ENCODE measurements at regions of chr12 and their contacts with region 1.

Region 1: DNA sequence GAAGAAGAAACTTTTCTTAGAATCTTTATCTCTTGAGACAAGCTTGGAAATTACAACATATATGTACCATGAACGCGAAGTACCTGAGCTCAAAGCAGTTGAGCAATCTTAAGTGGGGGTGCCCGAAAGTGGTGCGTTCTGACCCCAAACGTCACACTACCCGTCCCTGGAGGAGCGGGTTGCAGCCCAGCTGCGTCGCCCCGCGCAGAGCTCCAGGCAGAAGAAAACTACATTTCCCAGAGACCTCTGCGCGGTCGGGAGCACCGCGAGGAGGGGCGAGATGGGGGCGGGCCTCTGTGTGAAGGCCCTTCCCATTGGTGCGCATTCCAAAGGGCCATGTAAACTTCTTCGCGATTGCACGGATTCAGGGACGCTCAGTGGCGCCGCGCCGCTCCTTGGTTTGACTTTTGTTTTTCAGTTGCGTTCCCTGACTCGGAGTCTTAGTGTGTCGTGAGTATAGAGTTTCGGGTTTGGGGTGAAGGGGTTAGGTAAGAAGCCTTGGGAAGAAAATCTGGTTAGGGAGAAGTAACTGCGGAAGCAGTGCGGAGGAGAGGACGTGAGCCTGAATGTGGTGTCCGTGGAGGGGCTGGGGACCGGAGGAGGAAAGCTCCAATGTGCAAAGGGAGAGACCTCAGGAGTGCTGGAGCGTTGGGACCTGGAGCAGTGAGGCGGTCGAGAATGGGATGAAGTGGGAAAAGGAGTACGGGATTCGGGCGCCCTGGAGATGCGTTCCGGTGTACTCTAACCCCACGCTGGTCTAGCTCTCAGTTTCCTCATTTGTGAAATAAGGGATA is at the start of gene CCDC77:
- DNase-seq: peak; percentile 97
- ATAC-seq: peak; percentile 100
- H3K4me3 ChIP-seq: peak within 1 kb of the TSS; percentile 76 to 89 (median 82)
- H3K4me3 Mint-ChIP-seq: no peak within 1 kb of the TSS
- H3K27ac ChIP-seq: peak within 1 kb of the TSS; percentile 53 to 76
- H3K27ac Mint-ChIP-seq: no peak within 1 kb of the TSS
- H3K4me1 ChIP-seq: peaks cover 11 to 14% of the 10 kb centered on the region in 2 donors
- H3K4me1 Mint-ChIP-seq: no peaks in the 10 kb centered on the region
- H3K27me3 ChIP-seq: no peaks in the 10 kb centered on the region
- H3K27me3 Mint-ChIP-seq: no peaks in the 10 kb centered on the region
- CTCF ChIP-seq: peak; percentile 21
- total RNA-seq, gene CCDC77: 12.9 and 18.5 TPM in 2 replicates

Region 2: DNA sequence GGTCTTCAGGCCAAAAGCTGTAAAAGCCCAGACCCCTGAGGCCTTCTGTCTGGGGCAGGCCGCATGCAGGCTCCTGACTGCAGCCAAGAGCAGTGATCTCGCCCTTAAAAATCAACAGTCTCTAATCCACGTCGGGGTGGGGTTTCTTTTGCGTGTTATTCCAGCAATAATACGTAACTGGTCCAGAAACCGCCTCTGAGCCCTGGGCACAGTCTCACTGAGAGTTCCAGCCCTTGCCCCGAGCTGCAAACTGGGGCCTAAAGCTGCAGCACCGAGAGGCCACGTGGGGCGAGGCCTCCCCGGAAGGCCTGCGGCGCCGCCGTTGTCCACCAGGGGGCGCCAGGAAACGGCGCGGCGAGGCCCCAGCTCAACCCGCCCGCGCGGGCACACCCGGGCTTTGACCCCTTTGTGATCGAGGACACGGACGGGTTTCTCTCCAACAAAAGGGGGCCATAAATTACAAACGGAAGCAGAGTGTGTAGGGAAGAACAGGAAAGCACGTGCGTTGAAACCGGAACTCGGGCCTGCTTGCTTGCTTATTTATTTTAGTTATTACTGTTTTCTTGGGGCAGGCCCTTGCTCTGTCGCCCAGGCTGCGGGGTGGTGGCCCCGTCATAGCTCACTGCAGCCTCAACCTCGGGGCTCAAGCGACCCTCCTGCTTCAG is 174.6 kb after region 1 on chr12:
- CTCF ChIA-PET with region 1: no interaction called
- POLR2A ChIA-PET with region 1: no interaction called
- intact Hi-C with region 1: no loop called
- DNase-seq: peak; percentile 88
- ATAC-seq: peak; percentile 99
- H3K4me3 ChIP-seq: peak overlapping the region in 4 of 5 experiments; percentile 20 to 34 (median 26)
- H3K4me3 Mint-ChIP-seq: peak overlapping the region; percentile 79
- H3K27ac ChIP-seq: no peak overlapping the region
- H3K27ac Mint-ChIP-seq: peak overlapping the region; percentile 65
- H3K4me1 ChIP-seq: peaks cover 8 to 12% of the 10 kb centered on the region in 2 donors
- H3K4me1 Mint-ChIP-seq: peaks cover 8% of the 10 kb centered on the region
- H3K27me3 ChIP-seq: no peaks in the 10 kb centered on the region
- H3K27me3 Mint-ChIP-seq: no peaks in the 10 kb centered on the region
- CTCF ChIP-seq: peak; percentile 97

Region 3: GRCh38 chr12:779745-780734 is 378.6 kb after region 1 on chr12:
- CTCF ChIA-PET with region 1: no interaction called
- POLR2A ChIA-PET with region 1: no interaction called
- intact Hi-C with region 1: no loop called
- DNase-seq: no peak
- ATAC-seq: no peak
- H3K4me3 ChIP-seq: no peak overlapping the region
- H3K4me3 Mint-ChIP-seq: no peak overlapping the region
- H3K27ac ChIP-seq: no peak overlapping the region
- H3K27ac Mint-ChIP-seq: no peak overlapping the region
- H3K4me1 ChIP-seq: peaks cover 4 to 26% of the 10 kb centered on the region in 2 donors
- H3K4me1 Mint-ChIP-seq: peaks cover 53% of the 10 kb centered on the region
- H3K27me3 ChIP-seq: no peaks in the 10 kb centered on the region
- H3K27me3 Mint-ChIP-seq: no peaks in the 10 kb centered on the region
- CTCF ChIP-seq: no peak

Region 4: GRCh38 chr12:990661-991349 is 589.4 kb after region 1 on chr12 and contains the start of gene ERC1:
- CTCF ChIA-PET with region 1: no interaction called
- POLR2A ChIA-PET with region 1: no interaction called
- intact Hi-C with region 1: loop called (anchors 5 kb)
- DNase-seq: peak; percentile 93
- ATAC-seq: peak; percentile 87
- H3K4me3 ChIP-seq: peak within 1 kb of the TSS; percentile 60 to 97 (median 88)
- H3K4me3 Mint-ChIP-seq: peak within 1 kb of the TSS; percentile 98
- H3K27ac ChIP-seq: peak within 1 kb of the TSS; percentile 54 to 90
- H3K27ac Mint-ChIP-seq: peak within 1 kb of the TSS; percentile 97
- H3K4me1 ChIP-seq: peaks cover 16 to 18% of the 10 kb centered on the region in 2 donors
- H3K4me1 Mint-ChIP-seq: peaks cover 24% of the 10 kb centered on the region
- H3K27me3 ChIP-seq: no peaks in the 10 kb centered on the region
- H3K27me3 Mint-ChIP-seq: no peaks in the 10 kb centered on the region
- CTCF ChIP-seq: no peak
- total RNA-seq, gene ERC1: 77.6 and 90.0 TPM in 2 replicates

Region 5: DNA sequence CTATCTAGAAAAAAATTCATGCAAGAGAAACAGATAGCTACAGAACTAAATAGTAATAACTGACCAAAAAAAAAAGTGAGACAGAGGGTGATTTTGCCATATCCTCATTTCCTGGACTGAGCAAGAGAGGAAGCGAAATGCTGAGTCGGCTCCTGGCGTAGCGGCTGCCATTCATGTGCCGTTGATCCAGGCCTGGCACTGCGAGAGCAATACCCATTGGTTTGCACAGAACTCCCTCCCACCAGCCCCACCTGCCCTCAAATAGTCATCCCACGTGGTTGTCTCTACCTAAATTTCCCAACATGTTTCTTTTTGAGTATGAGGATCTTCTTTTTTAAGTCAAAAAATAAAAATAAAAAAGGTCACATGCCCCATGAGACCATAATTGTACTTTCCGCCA is 1218.2 kb after region 1 on chr12:
- CTCF ChIA-PET with region 1: no interaction called
- POLR2A ChIA-PET with region 1: no interaction called
- intact Hi-C with region 1: no loop called
- DNase-seq: no peak
- ATAC-seq: no peak
- H3K4me3 ChIP-seq: no peak overlapping the region
- H3K4me3 Mint-ChIP-seq: no peak overlapping the region
- H3K27ac ChIP-seq: no peak overlapping the region
- H3K27ac Mint-ChIP-seq: no peak overlapping the region
- H3K4me1 ChIP-seq: peaks cover 17 to 25% of the 10 kb centered on the region in 2 donors
- H3K4me1 Mint-ChIP-seq: peaks cover 33% of the 10 kb centered on the region
- H3K27me3 ChIP-seq: peaks cover 0 to 2% (median 0%) of the 10 kb centered on the region in 4 experiments
- H3K27me3 Mint-ChIP-seq: peaks cover 3% of the 10 kb centered on the region
- CTCF ChIP-seq: no peak